ENCODE measurements at regions of chr10 and their contacts with region 1.

Region 1: GRCh38 chr10:12710594-12711349 is 290.7 kb downstream of the CCDC3 start:
- DNase-seq: peak; percentile 90
- H3K4me3 Mint-ChIP-seq: no peak overlapping the region
- H3K27ac Mint-ChIP-seq: peak overlapping the region; percentile 81
- H3K4me1 Mint-ChIP-seq: peaks cover 20% of the 10 kb centered on the region
- H3K27me3 Mint-ChIP-seq: no peaks in the 10 kb centered on the region

Region 2: GRCh38 chr10:11782793-11783557 is 927.8 kb before region 1 on chr10:
- CTCF ChIA-PET with region 1: no interaction called
- intact Hi-C with region 1: loop called (anchors 1 kb)
- DNase-seq: peak; percentile 9
- H3K4me3 Mint-ChIP-seq: no peak overlapping the region
- H3K27ac Mint-ChIP-seq: no peak overlapping the region
- H3K4me1 Mint-ChIP-seq: peaks cover 8% of the 10 kb centered on the region
- H3K27me3 Mint-ChIP-seq: no peaks in the 10 kb centered on the region

Region 3: GRCh38 chr10:12214763-12215218 is 496.0 kb before region 1 on chr10:
- CTCF ChIA-PET with region 1: interaction called, 8 read pairs
- intact Hi-C with region 1: loop called (anchors 1 kb)
- DNase-seq: peak; percentile 64
- H3K4me3 Mint-ChIP-seq: peak overlapping the region; percentile 30
- H3K27ac Mint-ChIP-seq: peak overlapping the region; percentile 74
- H3K4me1 Mint-ChIP-seq: peaks cover 10% of the 10 kb centered on the region
- H3K27me3 Mint-ChIP-seq: no peaks in the 10 kb centered on the region

Region 4: DNA sequence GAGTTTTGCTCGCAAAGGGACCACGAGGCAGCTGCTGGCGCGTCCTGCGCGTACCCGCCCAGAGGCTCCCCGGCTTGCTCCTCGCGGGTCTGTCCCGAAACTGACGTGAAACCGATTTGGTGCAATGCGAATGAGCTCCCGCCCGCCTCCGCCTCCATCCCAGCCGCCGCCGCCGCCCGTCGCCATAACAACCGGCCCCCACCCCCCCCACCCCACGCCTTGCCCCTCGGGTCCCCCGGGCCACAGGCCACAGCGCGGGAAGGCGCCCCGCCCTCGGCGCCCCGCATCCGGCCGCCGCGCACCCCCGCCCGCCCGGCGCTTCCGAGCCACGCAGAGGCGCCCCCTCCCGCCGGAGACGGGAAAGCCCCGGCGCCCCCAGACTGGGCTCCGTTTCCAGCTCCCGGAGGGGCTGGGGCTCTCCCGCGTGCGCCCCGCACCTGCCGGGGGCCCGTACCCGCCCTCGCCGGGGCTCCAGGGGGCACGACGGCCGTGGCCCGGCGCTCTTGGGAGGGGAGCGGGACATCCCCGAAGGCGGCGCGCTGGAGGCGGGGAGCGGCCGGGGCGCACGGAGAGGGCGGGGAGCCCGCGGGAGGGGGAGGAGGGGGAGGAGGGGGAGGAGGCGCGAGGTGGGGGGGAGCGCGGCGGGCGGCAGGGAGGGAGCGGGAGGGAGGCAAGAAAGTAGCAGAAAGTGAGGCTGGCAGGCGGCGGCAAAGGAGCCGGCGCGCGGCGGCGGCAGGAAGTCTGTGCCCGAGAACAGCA is 361.7 kb before region 1 on chr10 and contains the start of gene CAMK1D:
- CTCF ChIA-PET with region 1: no interaction called
- intact Hi-C with region 1: loop called (anchors 5 kb)
- DNase-seq: peak; percentile 86
- H3K4me3 Mint-ChIP-seq: peak within 1 kb of the TSS; percentile 95
- H3K27ac Mint-ChIP-seq: peak within 1 kb of the TSS; percentile 91
- H3K4me1 Mint-ChIP-seq: peaks cover 35% of the 10 kb centered on the region
- H3K27me3 Mint-ChIP-seq: peaks cover 4% of the 10 kb centered on the region
- total RNA-seq, gene CAMK1D: 9.5 to 11.3 TPM

Region 5: DNA sequence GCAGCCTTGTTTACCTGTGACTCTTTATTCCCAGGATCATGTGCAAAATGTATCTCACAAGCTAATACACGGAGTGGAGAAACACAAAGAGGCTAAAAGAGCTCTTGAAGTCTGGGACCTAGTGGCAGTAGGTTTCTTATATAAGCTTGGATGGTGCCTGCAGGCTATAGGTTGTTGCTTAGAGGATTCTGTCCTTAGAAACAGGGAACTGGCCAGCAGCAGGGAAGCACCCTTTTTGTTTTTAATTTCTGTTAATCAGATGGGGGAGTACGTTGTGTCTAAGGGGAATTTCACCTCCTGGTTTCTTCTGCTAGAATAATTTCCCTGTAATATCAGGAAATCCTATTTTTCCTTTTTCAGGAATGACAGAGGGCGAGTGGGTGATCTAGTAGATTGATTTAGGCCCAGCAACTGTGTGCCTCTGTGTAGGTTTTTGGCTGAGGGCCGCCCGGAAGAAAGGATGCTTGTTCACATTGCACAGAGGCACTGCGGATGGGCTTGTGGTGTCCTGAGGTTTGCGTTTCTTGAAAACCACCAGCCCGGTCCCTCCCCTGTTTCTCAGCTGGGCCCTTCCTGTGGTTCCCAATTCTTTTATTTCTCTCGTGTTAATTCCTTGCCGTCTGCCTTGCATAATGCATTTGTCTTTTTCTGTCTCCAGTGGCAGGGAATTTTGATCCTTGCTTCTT is 203.5 kb before region 1 on chr10:
- CTCF ChIA-PET with region 1: no interaction called
- intact Hi-C with region 1: loop called (anchors 5 kb)
- DNase-seq: peak; percentile 39
- H3K4me3 Mint-ChIP-seq: no peak overlapping the region
- H3K27ac Mint-ChIP-seq: no peak overlapping the region
- H3K4me1 Mint-ChIP-seq: peaks cover 41% of the 10 kb centered on the region
- H3K27me3 Mint-ChIP-seq: no peaks in the 10 kb centered on the region

Region 6: DNA sequence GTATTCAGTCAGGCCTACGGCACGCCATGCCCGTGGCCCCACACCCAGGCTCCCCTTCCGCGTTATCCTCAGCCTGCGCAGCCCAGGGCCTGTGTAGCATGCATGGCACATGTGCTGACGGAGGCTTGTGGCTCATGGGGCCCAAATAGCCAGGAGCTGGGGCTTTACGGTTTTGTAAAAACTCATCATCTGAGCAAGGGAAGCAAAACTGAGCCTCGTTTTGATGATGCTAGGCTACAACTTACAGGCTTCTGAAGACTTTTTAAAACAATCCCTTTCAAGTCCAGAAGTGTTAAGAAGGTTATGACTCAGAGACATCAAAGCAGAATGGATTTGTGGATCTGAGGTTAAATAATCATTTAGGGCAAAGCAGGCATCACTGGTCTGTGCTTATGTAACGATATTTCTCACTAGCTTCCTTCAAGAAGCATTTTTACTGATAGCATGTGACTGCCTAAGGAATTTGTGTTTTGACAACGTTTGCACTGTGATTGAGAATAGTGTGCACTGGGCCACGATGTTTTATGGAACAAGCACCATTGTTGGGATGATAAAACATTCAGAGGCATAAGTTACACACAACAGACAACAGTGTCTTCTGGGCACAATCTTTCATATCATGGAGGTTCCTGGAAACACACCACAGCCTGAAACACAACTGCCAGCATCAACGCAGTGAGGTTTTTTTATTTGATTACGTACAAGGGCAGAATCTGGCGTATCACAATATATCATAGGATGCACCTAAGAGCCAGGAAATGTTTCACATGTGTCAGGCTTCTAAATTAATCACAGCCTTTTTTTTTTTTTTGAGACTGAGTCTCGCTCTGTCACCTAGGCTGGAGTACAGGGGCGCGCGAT is 16.4 kb after region 1 on chr10:
- CTCF ChIA-PET with region 1: interaction called, 18 read pairs
- intact Hi-C with region 1: no loop called
- DNase-seq: peak; percentile 72
- H3K4me3 Mint-ChIP-seq: no peak overlapping the region
- H3K27ac Mint-ChIP-seq: peak overlapping the region; percentile 7
- H3K4me1 Mint-ChIP-seq: peaks cover 27% of the 10 kb centered on the region
- H3K27me3 Mint-ChIP-seq: no peaks in the 10 kb centered on the region

Region 7: DNA sequence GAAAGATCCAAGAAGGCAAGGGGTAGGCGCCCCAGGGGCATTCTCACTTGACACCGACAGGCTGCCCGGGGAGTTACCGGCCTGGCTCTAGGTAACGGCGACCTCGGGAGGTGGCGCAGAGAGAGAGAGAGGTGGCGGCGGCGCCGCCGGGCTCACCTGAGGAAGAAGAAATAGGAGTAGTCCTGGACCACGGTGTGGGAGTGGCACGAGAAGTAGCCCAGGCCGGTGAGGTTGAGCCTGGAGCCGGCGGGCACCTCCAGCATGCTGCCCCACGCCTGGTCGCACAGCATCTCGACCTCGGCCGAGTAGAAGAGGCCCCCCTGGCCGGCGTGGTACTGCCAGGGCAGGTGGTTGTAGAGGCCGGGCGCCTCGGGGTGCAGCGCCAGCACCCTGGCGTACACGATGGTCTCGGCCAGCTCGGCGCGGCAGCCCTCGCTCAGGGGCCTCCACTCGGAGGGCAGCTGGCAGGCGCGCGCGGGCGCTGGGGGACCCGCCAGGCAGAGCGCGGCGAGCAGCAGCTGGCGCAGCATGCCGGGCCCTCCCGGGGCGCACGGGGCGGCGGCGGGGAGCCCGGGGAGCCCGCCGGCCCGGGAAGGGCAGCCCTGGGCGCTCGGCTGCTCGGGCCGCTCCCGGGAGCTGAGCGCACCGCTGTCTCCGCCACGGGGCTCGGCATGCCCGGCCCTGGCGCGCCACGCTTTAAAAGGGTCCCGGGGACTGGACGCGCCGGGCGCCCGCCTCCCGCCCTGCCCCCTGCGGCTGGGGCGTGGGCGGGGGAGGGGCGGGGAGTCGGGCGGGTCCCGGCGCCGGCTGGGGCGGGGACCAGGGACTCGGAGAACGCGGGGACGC is 290.5 kb after region 1 on chr10 and contains the start of gene CCDC3:
- CTCF ChIA-PET with region 1: no interaction called
- intact Hi-C with region 1: no loop called
- DNase-seq: peak; percentile 8
- H3K4me3 Mint-ChIP-seq: peak within 1 kb of the TSS; percentile 40
- H3K27ac Mint-ChIP-seq: no peak within 1 kb of the TSS
- H3K4me1 Mint-ChIP-seq: peaks cover 4% of the 10 kb centered on the region
- H3K27me3 Mint-ChIP-seq: peaks cover 53% of the 10 kb centered on the region
- total RNA-seq, gene CCDC3: 0.14 TPM in 1 of 2 experiments, not detected in the other

Region 8: DNA sequence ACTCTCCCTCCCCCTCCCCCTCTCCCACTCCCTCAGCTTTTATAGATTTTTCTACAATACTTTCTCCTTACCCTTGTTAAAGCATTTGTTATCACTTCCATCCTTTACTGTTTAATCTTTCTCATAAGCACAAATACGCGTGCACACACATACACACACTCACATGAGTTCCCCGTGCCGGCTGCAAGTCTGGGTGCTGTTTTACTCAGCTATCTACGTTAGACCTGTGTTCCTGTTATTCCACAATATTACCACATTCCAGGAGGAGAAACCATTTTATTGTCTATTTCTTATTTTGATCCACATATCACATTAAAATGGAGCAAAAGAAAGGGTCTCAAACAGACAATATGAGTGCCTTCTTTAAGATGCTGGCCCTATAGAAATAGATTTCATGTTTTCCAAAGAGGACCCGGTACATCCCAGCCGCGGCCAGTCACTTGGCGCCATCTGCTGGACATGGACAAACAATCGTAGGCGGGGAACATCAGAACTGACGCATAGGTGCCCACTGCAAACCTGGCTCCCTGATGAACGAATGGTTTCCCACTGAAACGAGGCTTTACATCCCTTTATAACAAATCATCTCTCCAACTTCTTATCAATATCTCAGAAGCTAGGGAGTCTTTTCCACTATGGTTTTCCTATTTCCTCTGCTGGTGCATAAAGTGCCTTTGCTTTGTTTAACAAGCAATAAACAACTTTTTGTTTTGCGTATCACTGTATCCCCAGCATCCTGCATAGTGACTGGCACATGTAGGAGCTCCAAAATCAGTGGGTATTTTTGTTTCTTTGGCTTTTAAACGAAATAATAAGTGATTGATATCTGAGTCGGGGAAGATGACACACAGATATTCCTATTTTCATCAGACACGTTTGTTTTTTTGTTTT is 364.0 kb after region 1 on chr10:
- CTCF ChIA-PET with region 1: no interaction called
- intact Hi-C with region 1: loop called (anchors 5 kb)
- DNase-seq: peak; percentile 79
- H3K4me3 Mint-ChIP-seq: no peak overlapping the region
- H3K27ac Mint-ChIP-seq: no peak overlapping the region
- H3K4me1 Mint-ChIP-seq: no peaks in the 10 kb centered on the region
- H3K27me3 Mint-ChIP-seq: peaks cover 20% of the 10 kb centered on the region